Dorsolateral prefrontal cortex (tissue), 120 donors: ENCODE measurements at regions of chr6 and their contacts with region 1.

Region 1: DNA sequence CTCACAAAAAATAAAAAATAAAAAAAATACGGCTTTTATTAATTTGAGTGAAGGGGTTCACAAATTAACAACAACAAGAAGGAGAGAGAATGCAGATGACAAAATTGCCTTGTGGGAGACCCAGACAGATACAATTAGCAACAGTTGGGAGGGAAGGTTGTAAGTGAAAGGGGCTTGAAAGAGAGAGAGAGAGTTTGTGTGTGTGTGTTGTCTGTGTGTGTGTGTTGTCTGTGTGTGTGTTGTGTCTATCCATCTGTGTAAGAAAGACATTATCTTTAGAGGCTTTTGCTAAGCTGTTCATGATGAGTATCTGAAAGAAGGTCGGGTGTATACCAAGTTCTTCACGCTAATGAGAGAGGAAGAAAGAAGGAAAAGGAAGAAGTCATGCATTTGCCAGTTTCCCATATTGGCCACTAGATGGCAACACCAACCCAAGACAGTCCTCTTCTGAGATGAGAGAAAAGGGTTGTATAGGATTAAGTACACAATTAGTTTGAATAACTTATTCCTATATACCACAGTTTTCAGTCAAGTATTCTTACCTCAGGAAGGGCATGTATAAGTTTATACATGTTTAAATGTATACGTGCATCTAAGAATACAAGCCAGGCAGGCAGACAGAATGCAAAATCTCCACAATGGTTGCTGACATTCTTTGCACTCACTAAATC is 63.7 kb upstream of the CD2AP start:
- DNase-seq: peak in 3 of 10 donors; percentile 16 to 38 (median 19)
- H3K4me3 ChIP-seq: peak overlapping the region in 57 of 59 donors; percentile 2 to 63 (median 43)
- H3K27ac ChIP-seq: peak overlapping the region in 11 of 59 donors; percentile 25 to 77 (median 50)
- H3K27me3 ChIP-seq: no peaks in the 10 kb centered on the region
- CTCF ChIP-seq: peak; percentile 80 to 100 (median 90)

Region 2: DNA sequence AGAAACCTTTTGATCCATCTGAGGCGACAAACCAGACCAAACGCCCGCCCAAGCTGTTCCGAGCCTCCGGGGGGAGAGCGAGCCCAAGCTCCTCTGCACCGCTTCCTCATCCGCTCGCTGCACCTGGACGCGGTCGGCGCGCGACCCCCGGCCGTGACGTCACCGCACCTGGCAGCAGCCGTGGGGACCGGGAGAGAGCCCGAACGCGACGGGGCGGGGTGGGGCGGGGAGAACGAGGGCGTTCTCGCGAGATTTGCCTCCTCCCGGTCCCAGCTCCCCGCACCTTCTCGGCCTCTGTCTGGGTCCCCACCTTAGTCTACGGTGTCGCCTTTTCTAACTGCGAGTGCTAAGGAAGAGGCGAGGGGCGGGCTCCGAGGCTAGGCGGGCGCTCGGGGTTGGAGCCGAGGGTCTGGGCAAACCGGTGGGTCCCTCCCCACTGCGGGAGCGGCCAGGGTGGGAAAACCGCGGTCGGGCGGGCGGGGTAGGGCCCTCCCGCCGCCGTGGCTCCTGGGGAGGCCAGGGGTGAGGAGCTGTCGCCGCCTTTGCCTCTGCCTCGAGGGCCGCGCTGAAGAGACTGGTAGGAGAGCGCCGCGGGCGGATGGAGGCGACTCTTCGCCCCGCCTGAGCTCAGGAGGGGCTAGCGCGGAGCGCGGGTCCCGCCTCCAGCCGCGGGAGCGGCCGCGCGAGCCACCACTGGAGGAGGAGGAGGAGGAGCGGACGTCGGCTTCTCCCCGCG is 63.8 kb after region 1 on chr6 and contains the start of gene CD2AP:
- intact Hi-C with region 1: loop called in 1 of 2 experiments (anchors 5 kb)
- DNase-seq: peak; percentile 58 to 88 (median 79)
- H3K4me3 ChIP-seq: peak within 1 kb of the TSS; percentile 44 to 99 (median 89)
- H3K27ac ChIP-seq: peak within 1 kb of the TSS; percentile 58 to 98 (median 93)
- H3K27me3 ChIP-seq: no peaks in the 10 kb centered on the region
- CTCF ChIP-seq: peak in 26 of 56 donors; percentile 4 to 41 (median 24)
- total RNA-seq, gene CD2AP: 7.5 to 21.7 (median 12.5) TPM

Region 3: DNA sequence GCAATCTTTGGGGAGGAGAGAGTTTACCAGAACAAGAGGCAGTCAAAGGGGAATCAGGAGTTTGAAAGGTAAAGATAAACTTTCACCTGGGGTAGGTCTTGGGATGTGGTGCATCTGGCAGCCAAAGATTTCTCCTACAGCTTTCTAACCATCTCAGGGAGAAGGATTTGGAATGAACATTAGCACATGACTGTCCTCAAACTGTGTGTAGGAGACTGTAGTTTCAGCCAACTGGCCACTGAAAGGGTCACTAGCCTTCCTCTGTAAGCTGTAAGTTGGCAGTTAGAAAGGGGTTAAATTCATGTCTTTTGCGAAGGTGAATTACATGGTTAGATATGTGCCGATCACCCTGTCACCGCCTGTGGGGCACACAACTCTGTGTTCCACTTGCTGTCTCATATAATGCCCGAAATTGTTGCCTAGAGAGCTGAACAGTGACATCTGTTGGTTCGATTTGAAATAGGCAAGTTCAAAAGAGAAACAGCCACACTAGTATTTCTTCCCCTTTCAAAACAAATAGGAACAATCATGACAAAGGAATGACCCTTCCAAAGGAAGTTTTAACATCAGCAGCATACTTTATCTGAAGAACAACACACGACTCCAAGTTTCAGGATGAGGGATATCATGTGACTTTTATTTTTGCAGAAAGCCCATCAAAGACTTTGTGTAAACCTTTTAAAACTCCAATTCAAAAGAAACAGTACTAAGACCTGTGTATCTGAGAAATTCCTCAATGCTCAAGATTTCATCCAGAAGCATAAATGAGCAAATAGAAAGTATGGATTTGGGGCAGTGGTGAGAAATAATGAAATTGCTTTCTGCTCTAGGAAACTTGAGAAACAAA is 366.8 kb after region 1 on chr6:
- intact Hi-C with region 1: loop called (anchors 2 to 5 kb)
- DNase-seq: peak in 3 of 10 donors; percentile 9 to 28 (median 24)
- H3K4me3 ChIP-seq: peak overlapping the region in 10 of 59 donors; percentile 3 to 45 (median 21)
- H3K27ac ChIP-seq: peak overlapping the region in 1 of 59 donors; percentile 34
- H3K27me3 ChIP-seq: peaks cover 0 to 4% (median 0%) of the 10 kb centered on the region in 45 donors
- CTCF ChIP-seq: peak; percentile 5 to 85 (median 70)

Region 4: DNA sequence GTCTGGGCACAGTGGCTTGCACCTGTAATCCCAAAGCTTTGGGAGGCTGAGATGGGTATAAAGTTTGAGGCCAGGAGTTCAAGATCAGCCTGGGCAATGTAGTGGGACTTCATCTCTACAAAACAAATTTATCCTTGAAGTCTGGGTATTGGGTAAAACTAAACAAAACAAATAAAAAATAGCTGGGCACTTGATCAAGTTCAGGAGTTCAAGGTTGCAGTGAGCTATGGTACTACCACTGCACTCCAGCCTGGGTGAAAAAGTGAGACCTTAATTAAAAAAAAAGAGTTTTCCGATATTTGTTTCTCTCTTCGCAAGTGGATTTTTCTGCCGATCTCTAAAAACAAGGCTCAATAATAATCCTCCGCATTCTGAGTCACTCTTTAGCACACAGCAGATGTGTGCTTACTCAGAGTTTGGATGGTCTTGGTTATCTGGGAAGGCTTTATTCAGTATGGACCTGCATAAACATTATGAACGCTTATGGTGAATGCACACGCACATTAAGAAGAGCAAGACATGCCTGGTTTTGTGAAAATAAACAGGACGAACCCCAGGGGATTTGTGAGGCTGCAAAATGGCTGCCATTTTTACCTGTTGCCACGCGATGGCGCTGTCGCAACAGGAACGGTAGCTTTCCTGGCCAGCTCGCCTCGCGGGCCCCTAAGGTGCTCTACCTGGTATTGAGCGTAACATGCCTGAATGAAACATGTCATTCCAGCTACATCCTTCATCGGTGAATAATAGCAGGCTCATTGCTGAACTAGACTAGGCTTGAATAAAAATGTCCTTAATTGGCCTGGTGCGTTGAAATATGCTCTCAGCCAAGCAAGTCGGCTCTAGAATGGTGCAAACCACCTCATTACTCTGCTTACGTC is 374.0 kb after region 1 on chr6:
- intact Hi-C with region 1: loop called (anchors 2 to 5 kb)
- DNase-seq: peak; percentile 29 to 72 (median 50)
- H3K4me3 ChIP-seq: peak overlapping the region in 52 of 59 donors; percentile 4 to 52 (median 36)
- H3K27ac ChIP-seq: peak overlapping the region in 1 of 59 donors; percentile 36
- H3K27me3 ChIP-seq: peaks cover 0 to 20% (median 0%) of the 10 kb centered on the region in 45 donors
- CTCF ChIP-seq: peak; percentile 82 to 98 (median 92)